ENCODE measurements at regions of chr1 and their contacts with region 1.

Region 1: GRCh38 chr1:161225534-161226319 is at the start of gene TOMM40L:
- DNase-seq: peak; percentile 98
- H3K27ac ChIP-seq: peak within 1 kb of the TSS; percentile 69
- CTCF ChIP-seq: peak; percentile 60

Region 2: GRCh38 chr1:161292631-161293030 is 66.9 kb after region 1 on chr1:
- CTCF ChIA-PET with region 1: interaction called, 24 read pairs
- POLR2A ChIA-PET with region 1: no interaction called
- DNase-seq: no peak
- H3K27ac ChIP-seq: no peak overlapping the region
- CTCF ChIP-seq: no peak

Region 3: GRCh38 chr1:161382214-161383019 is 156.7 kb after region 1 on chr1:
- CTCF ChIA-PET with region 1: interaction called, 23 read pairs
- POLR2A ChIA-PET with region 1: interaction called, 4 read pairs
- DNase-seq: peak; percentile 54
- H3K27ac ChIP-seq: peak overlapping the region; percentile 90
- CTCF ChIP-seq: peak; percentile 72